Activated B cell treated with CpG ODN at 0.5 μM for 24 hours (primary cell): ENCODE measurements at regions of chr6 and their contacts with region 1.

Region 1: GRCh38 chr6:118551063-118552053 is 3.3 kb downstream of the PLN start:
- DNase-seq: no peak
- ATAC-seq: peak; percentile 57
- H3K4me3 Mint-ChIP-seq: no peak overlapping the region
- H3K27ac Mint-ChIP-seq: no peak overlapping the region
- H3K4me1 Mint-ChIP-seq: no peaks in the 10 kb centered on the region
- H3K27me3 Mint-ChIP-seq: no peaks in the 10 kb centered on the region
- CTCF ChIP-seq: no peak

Region 2: DNA sequence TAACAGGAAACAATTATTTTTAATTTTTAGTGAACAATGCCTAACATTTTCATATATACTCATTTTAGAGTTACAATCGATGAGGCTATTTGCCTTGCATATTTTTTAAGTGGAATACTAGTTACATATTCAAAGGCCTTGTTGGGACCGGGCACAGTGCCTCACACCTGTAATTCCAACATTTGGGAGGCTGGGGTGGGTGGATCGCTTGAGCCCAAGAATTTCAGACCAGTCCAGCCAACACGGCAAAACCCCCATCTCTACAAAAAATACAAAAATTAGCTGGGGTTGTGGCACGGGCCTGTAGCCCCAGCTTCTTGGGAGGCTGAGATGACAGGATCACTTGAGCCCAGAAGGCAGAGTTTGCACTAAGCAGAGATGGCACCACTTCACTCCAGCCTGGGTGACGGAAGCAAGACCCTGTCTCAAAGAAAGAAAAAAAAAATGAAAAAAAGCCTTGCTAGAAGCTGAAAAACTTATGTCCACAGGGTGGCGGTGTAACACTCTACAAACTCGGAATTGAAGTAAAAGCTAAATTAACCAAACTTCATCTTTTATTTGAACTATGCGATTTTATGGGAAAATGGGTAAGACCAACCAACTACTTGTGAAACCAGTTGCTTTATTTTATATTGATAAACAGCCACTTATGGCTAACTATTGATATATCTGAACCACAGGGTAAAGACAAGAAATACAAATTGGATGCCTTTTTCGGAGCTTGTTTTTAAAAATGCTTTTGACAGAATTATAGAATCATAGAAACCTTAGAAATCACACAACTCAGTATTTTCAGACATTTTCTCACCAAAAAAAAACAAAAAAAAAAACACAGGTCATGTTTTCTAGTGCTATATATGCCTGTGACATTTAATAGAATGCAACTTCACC is 1101.6 kb before region 1 on chr6:
- CTCF ChIA-PET with region 1: no interaction called
- POLR2A ChIA-PET with region 1: no interaction called
- intact Hi-C with region 1: loop called (anchors 2 kb)
- DNase-seq: no peak
- ATAC-seq: peak; percentile 34
- H3K4me3 Mint-ChIP-seq: no peak overlapping the region
- H3K27ac Mint-ChIP-seq: no peak overlapping the region
- H3K4me1 Mint-ChIP-seq: no peaks in the 10 kb centered on the region
- H3K27me3 Mint-ChIP-seq: peaks cover 17% of the 10 kb centered on the region
- CTCF ChIP-seq: no peak